K562 (cell line): ENCODE measurements at regions of chrX and their contacts with region 1.

Region 1: GRCh38 chrX:136767104-136767941 is 13.4 kb downstream of the ARHGEF6 start:
- DNase-seq: peak; percentile 66 to 76 (median 69)
- ATAC-seq: peak; percentile 90
- H3K4me3 ChIP-seq: peak overlapping the region; percentile 68
- H3K27ac ChIP-seq: peak overlapping the region; percentile 82
- H3K4me1 ChIP-seq: peaks cover 16 to 19% of the 10 kb centered on the region in 2 experiments
- H3K27me3 ChIP-seq: no peaks in the 10 kb centered on the region
- CTCF ChIP-seq: peak; percentile 43 to 66 (median 50); a peak in 5 of 6 replicates
- EP300 ChIP-seq: no peak
- POLR2A ChIP-seq: peak; percentile 37; the same call in 1 of the 2 replicates
- RAD21 ChIP-seq: peak; percentile 28 to 38; a peak in 3 of 4 replicates

Region 2: DNA sequence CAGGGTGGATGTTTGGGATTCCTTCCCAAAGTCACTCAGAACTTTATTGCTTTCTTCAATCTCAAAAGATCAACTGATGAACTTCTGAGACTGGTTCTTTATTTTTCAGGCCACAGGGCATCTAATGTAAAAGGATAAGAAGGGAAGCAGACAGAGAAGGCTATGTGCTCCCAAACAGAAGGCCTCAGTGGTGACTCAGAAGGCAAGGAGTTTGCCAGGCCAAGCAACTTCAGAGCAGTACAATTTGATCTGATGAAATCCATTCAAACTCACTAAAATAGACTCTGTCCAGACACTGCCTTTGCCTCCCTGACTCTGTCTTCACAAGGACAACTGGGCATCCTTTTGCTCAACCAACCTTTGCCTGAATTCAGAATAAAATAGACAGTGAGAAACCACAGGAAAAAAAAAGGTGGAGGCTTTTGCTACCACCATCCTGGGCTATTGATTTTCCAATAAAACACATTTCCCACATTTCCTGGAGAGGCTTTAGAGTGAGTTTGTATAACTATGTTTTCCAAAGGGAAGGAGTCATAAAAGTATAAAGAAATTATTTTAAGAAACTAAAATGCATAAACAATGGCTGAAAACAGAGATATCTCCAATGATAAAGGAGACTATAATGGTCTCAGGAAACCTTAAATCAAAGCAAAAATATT is 41.7 kb before region 1 on chrX:
- CTCF ChIA-PET with region 1: no interaction called
- POLR2A ChIA-PET with region 1: no interaction called
- in situ Hi-C with region 1: no loop called
- intact Hi-C with region 1: loop called (anchors 5 kb)
- DNase-seq: no peak
- ATAC-seq: no peak
- H3K4me3 ChIP-seq: no peak overlapping the region
- H3K27ac ChIP-seq: no peak overlapping the region
- H3K4me1 ChIP-seq: no peaks in the 10 kb centered on the region; a peak in 1 of 5 replicates
- H3K27me3 ChIP-seq: no peaks in the 10 kb centered on the region
- CTCF ChIP-seq: no peak
- EP300 ChIP-seq: no peak
- POLR2A ChIP-seq: no peak
- RAD21 ChIP-seq: no peak

Region 3: GRCh38 chrX:136747003-136747986 is 20.0 kb before region 1 on chrX:
- CTCF ChIA-PET with region 1: no interaction called
- POLR2A ChIA-PET with region 1: interaction called, 14 read pairs
- in situ Hi-C with region 1: no loop called
- intact Hi-C with region 1: loop called (anchors 2 kb)
- DNase-seq: no peak
- ATAC-seq: no peak
- H3K4me3 ChIP-seq: no peak overlapping the region
- H3K27ac ChIP-seq: 0 out of 3 replicates have a peak overlapping the region, but pooled peaks have one; percentile 15
- H3K4me1 ChIP-seq: peaks cover 4 to 41% of the 10 kb centered on the region in 2 experiments; a peak in 4 of 5 replicates
- H3K27me3 ChIP-seq: no peaks in the 10 kb centered on the region
- CTCF ChIP-seq: no peak
- EP300 ChIP-seq: no peak
- POLR2A ChIP-seq: no peak
- RAD21 ChIP-seq: no peak

Region 4: DNA sequence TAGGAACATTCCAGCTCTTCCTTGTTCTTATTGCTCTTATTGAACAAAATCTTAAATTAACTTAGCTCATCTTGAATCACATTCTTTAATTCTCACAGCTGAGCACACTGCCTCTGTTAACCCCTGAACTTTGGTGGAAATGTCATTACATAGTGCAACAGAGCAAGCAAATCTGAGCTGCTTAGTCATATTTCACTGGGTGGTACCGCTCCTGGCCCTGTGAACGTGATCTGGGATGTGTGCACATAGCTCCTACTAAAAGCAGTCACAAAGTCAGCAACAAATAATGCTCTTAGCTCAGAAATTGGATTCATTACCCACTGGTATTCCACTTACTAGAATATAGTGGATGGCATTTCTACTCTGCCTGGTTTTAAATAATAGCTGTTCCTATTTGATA is 14.5 kb before region 1 on chrX:
- CTCF ChIA-PET with region 1: no interaction called
- POLR2A ChIA-PET with region 1: interaction called, 14 read pairs
- in situ Hi-C with region 1: no loop called
- intact Hi-C with region 1: loop called (anchors 2 kb)
- DNase-seq: no peak
- ATAC-seq: no peak
- H3K4me3 ChIP-seq: no peak overlapping the region
- H3K27ac ChIP-seq: no peak overlapping the region
- H3K4me1 ChIP-seq: peaks cover 4 to 8% of the 10 kb centered on the region in 2 experiments; a peak in 3 of 5 replicates
- H3K27me3 ChIP-seq: no peaks in the 10 kb centered on the region
- CTCF ChIP-seq: no peak
- EP300 ChIP-seq: no peak
- POLR2A ChIP-seq: no peak
- RAD21 ChIP-seq: no peak

Region 5: DNA sequence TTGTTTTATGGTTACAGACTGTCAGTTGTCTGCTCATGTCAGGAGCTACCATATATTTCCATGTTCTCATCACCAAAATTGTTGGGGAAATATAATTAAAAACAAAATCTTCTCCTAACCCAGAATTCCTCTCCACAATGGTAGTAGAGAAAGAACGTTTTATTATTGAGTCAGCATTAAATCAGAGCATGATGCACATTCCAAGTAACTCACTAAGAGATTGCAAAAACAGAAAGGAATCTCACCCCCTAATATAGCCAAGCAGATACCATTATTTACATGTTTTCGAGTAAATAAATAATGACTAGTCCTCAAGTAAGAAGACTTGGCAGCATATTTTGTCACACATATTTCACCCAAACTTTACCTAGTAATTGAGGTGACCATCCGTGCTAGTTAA is 49.6 kb after region 1 on chrX:
- CTCF ChIA-PET with region 1: no interaction called
- POLR2A ChIA-PET with region 1: no interaction called
- in situ Hi-C with region 1: no loop called
- intact Hi-C with region 1: no loop called
- DNase-seq: no peak
- ATAC-seq: no peak
- H3K4me3 ChIP-seq: no peak overlapping the region
- H3K27ac ChIP-seq: no peak overlapping the region
- H3K4me1 ChIP-seq: peaks cover 0 to 4% of the 10 kb centered on the region in 2 experiments; a peak in 2 of 5 replicates
- H3K27me3 ChIP-seq: no peaks in the 10 kb centered on the region
- CTCF ChIP-seq: no peak
- EP300 ChIP-seq: no peak
- POLR2A ChIP-seq: no peak
- RAD21 ChIP-seq: no peak

Region 6: GRCh38 chrX:136847876-136848337 is 80.6 kb after region 1 on chrX:
- CTCF ChIA-PET with region 1: no interaction called
- POLR2A ChIA-PET with region 1: interaction called, 3 read pairs
- in situ Hi-C with region 1: no loop called
- intact Hi-C with region 1: loop called (anchors 1 kb)
- DNase-seq: peak in 2 of 4 experiments; percentile 48 to 78
- ATAC-seq: peak; percentile 95
- H3K4me3 ChIP-seq: no peak overlapping the region
- H3K27ac ChIP-seq: peak overlapping the region; percentile 75
- H3K4me1 ChIP-seq: peaks cover 10 to 14% of the 10 kb centered on the region in 2 experiments; a peak in 3 of 5 replicates
- H3K27me3 ChIP-seq: no peaks in the 10 kb centered on the region
- CTCF ChIP-seq: no peak
- EP300 ChIP-seq: peak; percentile 87
- POLR2A ChIP-seq: no peak
- RAD21 ChIP-seq: peak in 1 of 2 experiments; percentile 30; a peak in 3 of 4 replicates

Region 7: GRCh38 chrX:136866337-136867095 is 99.2 kb after region 1 on chrX:
- CTCF ChIA-PET with region 1: no interaction called
- POLR2A ChIA-PET with region 1: interaction called, 3 read pairs
- in situ Hi-C with region 1: no loop called
- intact Hi-C with region 1: loop called (anchors 5 kb)
- DNase-seq: no peak
- ATAC-seq: peak; percentile 43
- H3K4me3 ChIP-seq: no peak overlapping the region
- H3K27ac ChIP-seq: peak overlapping the region; percentile 33; the same call in 1 of the 3 replicates
- H3K4me1 ChIP-seq: no peaks in the 10 kb centered on the region; a peak in 1 of 5 replicates
- H3K27me3 ChIP-seq: no peaks in the 10 kb centered on the region
- CTCF ChIP-seq: no peak
- EP300 ChIP-seq: no peak
- POLR2A ChIP-seq: 0 out of 2 replicates have a peak, but pooled peaks have one; percentile 51
- RAD21 ChIP-seq: no peak

Region 8: GRCh38 chrX:136920001-136920400 is 152.7 kb after region 1 on chrX:
- CTCF ChIA-PET with region 1: no interaction called
- POLR2A ChIA-PET with region 1: no interaction called
- in situ Hi-C with region 1: no loop called
- intact Hi-C with region 1: loop called (anchors 2 kb)
- DNase-seq: no peak
- ATAC-seq: no peak
- H3K4me3 ChIP-seq: no peak overlapping the region
- H3K27ac ChIP-seq: no peak overlapping the region; the same call in 2 of the 3 replicates
- H3K4me1 ChIP-seq: no peaks in the 10 kb centered on the region; a peak in 1 of 5 replicates
- H3K27me3 ChIP-seq: no peaks in the 10 kb centered on the region
- CTCF ChIP-seq: no peak
- EP300 ChIP-seq: no peak
- POLR2A ChIP-seq: no peak
- RAD21 ChIP-seq: no peak